ENCODE measurements at regions of chr19 and their contacts with region 1.

Region 1: DNA sequence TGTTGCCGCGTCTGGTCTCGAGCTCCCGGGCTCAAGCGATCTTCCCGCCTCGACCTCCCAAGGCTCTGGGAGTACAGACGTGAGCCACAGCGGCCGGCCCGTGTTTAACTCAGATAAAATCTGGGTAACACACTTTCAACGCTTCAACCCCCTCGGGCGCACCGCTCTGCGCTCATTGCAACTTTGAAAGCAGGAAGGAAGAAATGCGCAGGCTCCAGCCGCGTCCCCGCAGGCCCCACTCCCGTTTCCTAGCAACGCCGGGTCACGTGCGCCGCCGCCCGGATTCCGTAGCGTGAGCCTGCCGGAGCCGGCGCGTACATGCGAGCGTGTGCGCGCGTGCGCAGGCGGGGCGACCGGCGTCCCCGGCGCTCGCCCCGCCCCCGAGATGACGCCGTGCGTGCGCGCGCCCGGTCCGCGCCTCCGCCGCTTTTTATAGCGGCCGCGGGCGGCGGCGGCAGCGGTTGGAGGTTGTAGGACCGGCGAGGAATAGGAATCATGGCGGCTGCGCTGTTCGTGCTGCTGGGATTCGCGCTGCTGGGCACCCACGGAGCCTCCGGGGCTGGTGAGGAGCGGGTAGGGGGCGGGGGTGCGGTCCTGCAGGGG is at the start of gene BSG:
- DNase-seq: peak; percentile 91 to 97
- ATAC-seq: peak; percentile 64 to 65
- H3K4me3 ChIP-seq: peak within 1 kb of the TSS; percentile 96
- H3K27ac ChIP-seq: peak within 1 kb of the TSS; percentile 97 to 100
- H3K4me1 ChIP-seq: peaks cover 29% of the 10 kb centered on the region
- CTCF ChIP-seq: no peak
- EP300 ChIP-seq: no peak
- POLR2A ChIP-seq: peak; percentile 96
- RAD21 ChIP-seq: no peak
- polyA plus RNA-seq, gene BSG: 237 and 285 TPM in 2 replicates

Region 2: GRCh38 chr19:556611-557382 is 15.4 kb before region 1 on chr19:
- CTCF ChIA-PET with region 1: interaction called, 10 read pairs
- POLR2A ChIA-PET with region 1: interaction called, 16 read pairs
- DNase-seq: no peak
- ATAC-seq: peak; percentile 35 to 46; a peak in 5 of 6 replicates
- H3K4me3 ChIP-seq: peak overlapping the region; percentile 19; the same call in 1 of the 3 replicates
- H3K27ac ChIP-seq: peak overlapping the region; percentile 80 to 81
- H3K4me1 ChIP-seq: peaks cover 18% of the 10 kb centered on the region
- CTCF ChIP-seq: no peak
- EP300 ChIP-seq: no peak
- POLR2A ChIP-seq: no peak
- RAD21 ChIP-seq: no peak

Region 3: GRCh38 chr19:588093-588740 is 16.0 kb after region 1 on chr19:
- CTCF ChIA-PET with region 1: interaction called, 31 read pairs
- POLR2A ChIA-PET with region 1: interaction called, 6 read pairs
- DNase-seq: peak in 1 of 2 experiments; percentile 92
- ATAC-seq: peak; percentile 55 to 73
- H3K4me3 ChIP-seq: peak overlapping the region; percentile 49; the same call in 2 of the 3 replicates
- H3K27ac ChIP-seq: peak overlapping the region; percentile 82 to 93
- H3K4me1 ChIP-seq: peaks cover 53% of the 10 kb centered on the region
- CTCF ChIP-seq: peak; percentile 52
- EP300 ChIP-seq: no peak
- POLR2A ChIP-seq: 0 out of 2 replicates have a peak, but pooled peaks have one; percentile 13
- RAD21 ChIP-seq: peak; percentile 44 to 63

Region 4: DNA sequence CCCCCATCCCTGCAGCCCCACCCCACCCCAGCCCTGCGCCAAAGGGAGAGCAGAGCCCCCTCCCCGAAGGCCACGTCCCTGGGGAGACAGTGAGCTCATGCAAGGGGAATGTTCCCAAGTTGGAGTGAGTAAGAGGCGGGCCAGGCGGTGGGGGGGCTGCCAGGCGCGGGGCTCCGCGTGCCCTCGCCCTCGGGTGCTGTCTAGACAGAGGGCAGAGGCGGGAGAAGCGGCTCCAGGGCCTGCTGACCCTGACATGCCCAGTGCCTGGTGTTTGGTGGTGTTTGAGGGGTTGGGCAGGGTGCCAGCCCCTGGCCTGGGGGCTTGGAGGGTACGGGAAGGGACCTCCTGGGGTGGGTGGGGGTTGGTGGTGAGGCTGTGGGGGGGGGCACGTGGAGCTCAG is 105.0 kb after region 1 on chr19:
- CTCF ChIA-PET with region 1: interaction called, 3 read pairs
- POLR2A ChIA-PET with region 1: interaction called, 10 read pairs
- DNase-seq: peak; percentile 61 to 86
- ATAC-seq: peak; percentile 32 to 65
- H3K4me3 ChIP-seq: peak overlapping the region; percentile 64
- H3K27ac ChIP-seq: peak overlapping the region; percentile 99
- H3K4me1 ChIP-seq: peaks cover 26% of the 10 kb centered on the region
- CTCF ChIP-seq: no peak
- EP300 ChIP-seq: peak in 1 of 2 experiments; percentile 71; a peak in 1 of 5 replicates
- POLR2A ChIP-seq: no peak; the same call in 1 of the 2 replicates
- RAD21 ChIP-seq: no peak

Measured in A549 (cell line).